Activated CD4-positive, alpha-beta T cell treated with anti-CD3 and anti-CD28 coated beads, Interleukin-2, amount 10 ng/mL, durations not matched to agents 24 days and 14 days (primary cell): ENCODE measurements at regions of chr2 and their contacts with region 1.

Region 1: GRCh38 chr2:7450188-7450832 is 533.1 kb downstream of the RNF144A start:
- DNase-seq: peak; percentile 90
- H3K4me3 Mint-ChIP-seq: peak overlapping the region; percentile 58
- H3K27ac Mint-ChIP-seq: peak overlapping the region; percentile 100
- H3K4me1 Mint-ChIP-seq: peaks cover 70% of the 10 kb centered on the region
- H3K27me3 Mint-ChIP-seq: no peaks in the 10 kb centered on the region

Region 2: GRCh38 chr2:7467782-7468447 is 17.6 kb after region 1 on chr2:
- intact Hi-C with region 1: loop called (anchors 1 kb)
- DNase-seq: peak; percentile 85
- H3K4me3 Mint-ChIP-seq: peak overlapping the region; percentile 51
- H3K27ac Mint-ChIP-seq: peak overlapping the region; percentile 97
- H3K4me1 Mint-ChIP-seq: peaks cover 36% of the 10 kb centered on the region
- H3K27me3 Mint-ChIP-seq: no peaks in the 10 kb centered on the region

Region 3: GRCh38 chr2:7539760-7540159 is 89.5 kb after region 1 on chr2:
- intact Hi-C with region 1: no loop called
- DNase-seq: no peak
- H3K4me3 Mint-ChIP-seq: no peak overlapping the region
- H3K27ac Mint-ChIP-seq: no peak overlapping the region
- H3K4me1 Mint-ChIP-seq: peaks cover 19% of the 10 kb centered on the region
- H3K27me3 Mint-ChIP-seq: no peaks in the 10 kb centered on the region

Region 4: GRCh38 chr2:7588295-7588694 is 138.0 kb after region 1 on chr2:
- intact Hi-C with region 1: loop called (anchors 1 kb)
- DNase-seq: peak; percentile 50
- H3K4me3 Mint-ChIP-seq: peak overlapping the region; percentile 2
- H3K27ac Mint-ChIP-seq: peak overlapping the region; percentile 68
- H3K4me1 Mint-ChIP-seq: peaks cover 22% of the 10 kb centered on the region
- H3K27me3 Mint-ChIP-seq: no peaks in the 10 kb centered on the region